Calu3 (cell line): ENCODE measurements at regions of chr3 and their contacts with region 1.

Region 1: GRCh38 chr3:160941885-160942494 is 163.2 kb downstream of the B3GALNT1 start:
- DNase-seq: peak; percentile 90
- H3K4me3 Mint-ChIP-seq: no peak overlapping the region
- H3K27ac Mint-ChIP-seq: no peak overlapping the region
- H3K4me1 Mint-ChIP-seq: peaks cover 17% of the 10 kb centered on the region
- H3K27me3 Mint-ChIP-seq: no peaks in the 10 kb centered on the region
- CTCF ChIP-seq: peak; percentile 79

Region 2: DNA sequence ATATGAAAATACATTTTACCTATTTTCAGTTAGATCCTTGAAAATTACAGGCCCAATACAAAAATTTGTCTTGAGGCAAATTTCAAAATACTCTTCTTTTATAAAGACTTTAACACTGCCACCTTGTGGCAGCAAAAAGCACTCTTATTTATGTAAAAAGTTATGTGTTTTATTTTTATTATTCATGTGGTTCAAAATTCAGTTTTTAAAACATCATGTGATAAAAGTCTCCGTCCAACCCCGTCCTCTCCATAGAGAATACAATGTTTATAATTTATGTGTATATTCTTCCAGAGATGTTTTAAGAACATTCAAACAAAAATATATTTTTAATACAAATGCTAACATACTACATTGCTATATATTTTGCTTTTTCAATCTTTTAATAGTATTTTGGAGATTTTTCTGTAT is 455.5 kb before region 1 on chr3:
- CTCF ChIA-PET with region 1: no interaction called
- intact Hi-C with region 1: loop called (anchors 10 kb)
- DNase-seq: peak; percentile 19
- H3K4me3 Mint-ChIP-seq: peak overlapping the region; percentile 70
- H3K27ac Mint-ChIP-seq: no peak overlapping the region
- H3K4me1 Mint-ChIP-seq: peaks cover 12% of the 10 kb centered on the region
- H3K27me3 Mint-ChIP-seq: no peaks in the 10 kb centered on the region
- CTCF ChIP-seq: peak; percentile 73

Region 3: GRCh38 chr3:160643994-160644393 is 298.0 kb before region 1 on chr3:
- CTCF ChIA-PET with region 1: interaction called, 3 read pairs
- intact Hi-C with region 1: loop called (anchors 2 kb)
- DNase-seq: no peak
- H3K4me3 Mint-ChIP-seq: no peak overlapping the region
- H3K27ac Mint-ChIP-seq: no peak overlapping the region
- H3K4me1 Mint-ChIP-seq: peaks cover 41% of the 10 kb centered on the region
- H3K27me3 Mint-ChIP-seq: no peaks in the 10 kb centered on the region
- CTCF ChIP-seq: peak; percentile 13

Region 4: DNA sequence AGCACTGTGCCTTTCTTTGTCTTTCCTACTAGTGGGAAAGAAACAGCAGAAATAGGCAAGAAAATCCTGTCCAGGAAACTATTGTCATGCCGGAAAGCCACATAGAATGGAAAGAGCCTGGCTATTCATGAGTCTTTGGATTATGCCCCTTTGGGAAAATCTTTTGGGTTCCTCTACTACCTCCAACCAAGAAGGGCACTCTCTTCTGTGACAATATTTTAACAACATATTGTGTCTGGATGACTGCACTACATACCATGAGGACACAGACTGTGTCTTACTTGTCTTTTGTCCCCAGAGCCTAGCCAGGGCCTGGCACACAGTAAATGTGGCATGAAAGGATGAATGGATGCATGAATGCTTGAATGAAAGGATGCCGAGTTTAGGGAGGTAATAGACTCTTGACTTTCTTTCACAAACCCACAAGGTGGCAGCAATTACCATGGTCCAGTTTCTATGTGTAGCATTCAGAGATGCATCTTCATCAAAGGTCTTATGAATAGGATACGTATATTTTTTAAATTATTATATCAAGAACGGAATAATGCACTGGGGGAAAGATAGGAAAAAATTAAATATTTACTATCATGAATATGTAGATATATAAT is 234.7 kb before region 1 on chr3:
- CTCF ChIA-PET with region 1: interaction called, 4 read pairs
- intact Hi-C with region 1: loop called (anchors 1 kb)
- DNase-seq: peak; percentile 58
- H3K4me3 Mint-ChIP-seq: no peak overlapping the region
- H3K27ac Mint-ChIP-seq: no peak overlapping the region
- H3K4me1 Mint-ChIP-seq: no peaks in the 10 kb centered on the region
- H3K27me3 Mint-ChIP-seq: no peaks in the 10 kb centered on the region
- CTCF ChIP-seq: peak; percentile 62

Region 5: GRCh38 chr3:162489853-162490252 is 1547.9 kb after region 1 on chr3:
- CTCF ChIA-PET with region 1: no interaction called
- intact Hi-C with region 1: no loop called
- DNase-seq: peak; percentile 22
- H3K4me3 Mint-ChIP-seq: no peak overlapping the region
- H3K27ac Mint-ChIP-seq: no peak overlapping the region
- H3K4me1 Mint-ChIP-seq: no peaks in the 10 kb centered on the region
- H3K27me3 Mint-ChIP-seq: no peaks in the 10 kb centered on the region
- CTCF ChIP-seq: peak; percentile 63